Body of pancreas (tissue), 4 donors: ENCODE measurements at regions of chr4 and their contacts with region 1.

Region 1: GRCh38 chr4:87150498-87151261 is 69.7 kb downstream of the KLHL8 start:
- DNase-seq: peak; percentile 49 to 73 (median 60)
- ATAC-seq: peak; percentile 77
- H3K4me3 ChIP-seq: no peak overlapping the region
- H3K27ac ChIP-seq: no peak overlapping the region
- H3K4me1 ChIP-seq: peaks cover 6% of the 10 kb centered on the region
- H3K27me3 ChIP-seq: no peaks in the 10 kb centered on the region
- CTCF ChIP-seq: peak; percentile 77 to 95 (median 82)
- POLR2A ChIP-seq: no peak

Region 2: GRCh38 chr4:87235020-87235671 is 84.5 kb after region 1 on chr4:
- intact Hi-C with region 1: loop called (anchors 5 kb)
- DNase-seq: no peak
- ATAC-seq: no peak
- H3K4me3 ChIP-seq: peak overlapping the region in 1 of 2 donors; percentile 25
- H3K27ac ChIP-seq: no peak overlapping the region
- H3K4me1 ChIP-seq: peaks cover 3% of the 10 kb centered on the region
- H3K27me3 ChIP-seq: no peaks in the 10 kb centered on the region
- CTCF ChIP-seq: no peak
- POLR2A ChIP-seq: no peak

Region 3: DNA sequence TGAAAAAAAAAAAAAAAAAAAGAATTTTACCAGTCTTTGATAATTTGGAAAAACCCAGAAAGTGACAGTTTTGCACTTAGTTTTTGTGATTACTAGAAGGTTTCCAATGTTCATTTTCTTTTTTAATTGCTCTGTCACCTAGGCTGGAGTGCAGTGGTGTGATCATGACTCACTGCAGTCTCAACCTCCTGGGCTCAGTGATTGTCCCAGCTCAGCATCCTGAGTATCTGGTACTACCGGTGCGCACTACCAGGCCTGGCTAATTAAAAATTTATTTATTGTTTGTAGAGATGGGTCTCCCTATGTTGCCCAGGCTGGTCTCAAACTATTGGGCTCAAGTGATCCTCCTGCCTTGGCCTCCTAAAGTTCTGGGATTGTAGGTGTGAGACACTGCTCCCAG is 275.0 kb after region 1 on chr4:
- intact Hi-C with region 1: no loop called
- DNase-seq: peak in 1 of 4 donors; percentile 27
- ATAC-seq: no peak
- H3K4me3 ChIP-seq: no peak overlapping the region
- H3K27ac ChIP-seq: peak overlapping the region in 2 of 4 donors; percentile 40 to 47
- H3K4me1 ChIP-seq: peaks cover 79% of the 10 kb centered on the region
- H3K27me3 ChIP-seq: no peaks in the 10 kb centered on the region
- CTCF ChIP-seq: no peak
- POLR2A ChIP-seq: no peak